Activated T-helper 2 cell treated with anti-CD3 and anti-CD28 coated beads, Interferon-gamma antibody, Interleukin-2, Interleukin-4, amounts not matched to agents 10 μg/mL and 5 μg/mL and 100 μg/mL, durations not matched to agents 14 hours and 24 hours and 36 hours (primary cell): ENCODE measurements at regions of chr9 and their contacts with region 1.

Region 1: DNA sequence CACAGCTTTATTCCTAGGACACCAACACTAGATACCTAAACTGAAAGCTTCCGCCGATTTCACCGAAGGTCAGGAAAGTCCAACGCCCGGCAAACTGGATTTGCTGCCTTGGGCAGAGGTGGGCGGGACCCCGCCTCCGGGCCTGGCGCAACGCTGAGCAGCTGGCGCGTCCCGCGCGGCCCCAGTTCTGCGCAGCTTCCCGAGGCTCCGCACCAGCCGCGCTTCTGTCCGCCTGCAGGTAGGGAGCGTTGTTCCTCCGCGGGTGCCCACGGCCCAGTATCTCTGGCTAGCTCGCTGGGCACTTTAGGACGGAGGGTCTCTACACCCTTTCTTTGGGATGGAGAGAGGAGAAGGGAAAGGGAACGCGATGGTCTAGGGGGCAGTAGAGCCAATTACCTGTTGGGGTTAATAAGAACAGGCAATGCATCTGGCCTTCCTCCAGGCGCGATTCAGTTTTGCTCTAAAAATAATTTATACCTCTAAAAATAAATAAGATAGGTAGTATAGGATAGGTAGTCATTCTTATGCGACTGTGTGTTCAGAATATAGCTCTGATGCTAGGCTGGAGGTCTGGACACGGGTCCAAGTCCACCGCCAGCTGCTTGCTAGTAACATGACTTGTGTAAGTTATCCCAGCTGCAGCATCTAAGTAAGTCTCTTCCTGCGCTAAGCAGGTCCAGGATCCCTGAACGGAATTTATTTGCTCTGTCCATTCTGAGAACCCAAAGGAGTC is at the start of gene CD274:
- DNase-seq: peak; percentile 77
- H3K4me3 Mint-ChIP-seq: peak within 1 kb of the TSS; percentile 97
- H3K27ac Mint-ChIP-seq: peak within 1 kb of the TSS; percentile 92
- H3K4me1 Mint-ChIP-seq: peaks cover 71% of the 10 kb centered on the region
- H3K27me3 Mint-ChIP-seq: no peaks in the 10 kb centered on the region
- total RNA-seq, gene CD274: 36.7 and 40.5 TPM in 2 replicates

Region 2: GRCh38 chr9:5375091-5375490 is 75.4 kb before region 1 on chr9:
- intact Hi-C with region 1: no loop called
- DNase-seq: no peak
- H3K4me3 Mint-ChIP-seq: no peak overlapping the region
- H3K27ac Mint-ChIP-seq: peak overlapping the region; percentile 9
- H3K4me1 Mint-ChIP-seq: peaks cover 17% of the 10 kb centered on the region
- H3K27me3 Mint-ChIP-seq: no peaks in the 10 kb centered on the region

Region 3: GRCh38 chr9:5543875-5544702 is 93.6 kb after region 1 on chr9:
- intact Hi-C with region 1: no loop called
- DNase-seq: no peak
- H3K4me3 Mint-ChIP-seq: no peak overlapping the region
- H3K27ac Mint-ChIP-seq: no peak overlapping the region
- H3K4me1 Mint-ChIP-seq: peaks cover 23% of the 10 kb centered on the region
- H3K27me3 Mint-ChIP-seq: no peaks in the 10 kb centered on the region

Region 4: GRCh38 chr9:5582835-5583195 is 132.3 kb after region 1 on chr9:
- intact Hi-C with region 1: loop called (anchors 1 kb)
- DNase-seq: peak; percentile 46
- H3K4me3 Mint-ChIP-seq: no peak overlapping the region
- H3K27ac Mint-ChIP-seq: peak overlapping the region; percentile 88
- H3K4me1 Mint-ChIP-seq: peaks cover 69% of the 10 kb centered on the region
- H3K27me3 Mint-ChIP-seq: no peaks in the 10 kb centered on the region